Activated CD4-positive, alpha-beta T cell treated with anti-CD3 and anti-CD28 coated beads for 36 hours (primary cell): ENCODE measurements at regions of chr2 and their contacts with region 1.

Region 1: DNA sequence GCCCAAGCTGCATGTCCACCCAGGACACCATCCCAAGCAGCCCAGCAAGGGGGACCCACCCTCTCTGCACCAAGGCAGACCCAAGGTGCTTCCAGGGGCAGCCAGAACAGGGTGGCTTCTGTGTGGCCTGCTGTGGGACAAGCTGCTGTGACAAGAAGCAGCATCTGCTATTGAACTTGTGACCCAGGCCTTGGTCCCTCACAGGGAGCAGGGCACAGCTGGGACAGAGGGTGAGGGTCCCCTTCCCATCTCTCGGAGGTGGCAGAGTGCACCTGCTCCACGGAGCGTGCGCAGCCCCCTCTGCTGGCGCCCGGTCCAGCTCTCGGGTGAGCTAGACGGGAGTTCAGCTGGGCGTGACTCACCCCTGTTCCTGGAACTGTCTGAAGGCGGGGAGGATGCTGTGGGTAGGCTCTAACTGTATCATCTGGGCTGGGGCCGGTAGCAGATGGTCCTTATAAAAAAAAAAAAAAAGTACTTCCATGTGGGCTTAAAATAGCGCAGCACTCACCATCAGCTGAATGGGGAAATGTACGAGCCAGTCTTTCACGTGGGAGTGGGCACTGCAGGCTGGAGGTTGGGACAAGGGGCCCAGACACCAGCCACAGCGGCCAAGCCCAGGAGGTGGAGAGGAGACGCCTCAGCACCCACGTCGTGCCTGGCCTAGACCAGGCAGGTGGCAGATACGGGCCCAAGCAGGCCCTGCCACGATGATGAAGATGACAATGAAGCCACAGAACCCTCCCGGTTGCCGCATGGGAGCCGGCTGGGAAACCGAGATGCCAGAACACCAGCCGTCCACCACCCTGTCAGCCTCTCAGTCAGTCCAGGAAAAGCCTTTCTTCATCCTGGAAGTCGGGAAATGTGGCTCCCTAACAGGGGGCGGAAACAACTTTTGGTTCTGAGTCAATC is 136.8 kb upstream of the ID2 start:
- DNase-seq: peak; percentile 96
- ATAC-seq: peak; percentile 66
- H3K4me3 Mint-ChIP-seq: no peak overlapping the region
- H3K27ac Mint-ChIP-seq: peak overlapping the region; percentile 99
- H3K4me1 Mint-ChIP-seq: peaks cover 77% of the 10 kb centered on the region
- H3K27me3 Mint-ChIP-seq: no peaks in the 10 kb centered on the region

Region 2: GRCh38 chr2:7567646-7568045 is 977.4 kb before region 1 on chr2:
- CTCF ChIA-PET with region 1: interaction called, 6 read pairs
- POLR2A ChIA-PET with region 1: no interaction called
- intact Hi-C with region 1: loop called in 1 of 2 experiments (anchors 10 kb)
- DNase-seq: peak; percentile 81
- ATAC-seq: peak; percentile 93
- H3K4me3 Mint-ChIP-seq: peak overlapping the region; percentile 9
- H3K27ac Mint-ChIP-seq: peak overlapping the region; percentile 88
- H3K4me1 Mint-ChIP-seq: peaks cover 55% of the 10 kb centered on the region
- H3K27me3 Mint-ChIP-seq: no peaks in the 10 kb centered on the region

Region 3: GRCh38 chr2:7845332-7845731 is 699.7 kb before region 1 on chr2:
- CTCF ChIA-PET with region 1: no interaction called
- POLR2A ChIA-PET with region 1: no interaction called
- intact Hi-C with region 1: loop called in 1 of 2 experiments (anchors 1 kb)
- DNase-seq: no peak
- ATAC-seq: no peak
- H3K4me3 Mint-ChIP-seq: no peak overlapping the region
- H3K27ac Mint-ChIP-seq: no peak overlapping the region
- H3K4me1 Mint-ChIP-seq: peaks cover 40% of the 10 kb centered on the region
- H3K27me3 Mint-ChIP-seq: peaks cover 6% of the 10 kb centered on the region

Region 4: GRCh38 chr2:8090748-8091700 is 454.0 kb before region 1 on chr2:
- CTCF ChIA-PET with region 1: no interaction called
- POLR2A ChIA-PET with region 1: no interaction called
- intact Hi-C with region 1: loop called in 1 of 2 experiments (anchors 1 kb)
- DNase-seq: peak; percentile 90
- ATAC-seq: peak; percentile 100
- H3K4me3 Mint-ChIP-seq: no peak overlapping the region
- H3K27ac Mint-ChIP-seq: no peak overlapping the region
- H3K4me1 Mint-ChIP-seq: no peaks in the 10 kb centered on the region
- H3K27me3 Mint-ChIP-seq: no peaks in the 10 kb centered on the region

Region 5: DNA sequence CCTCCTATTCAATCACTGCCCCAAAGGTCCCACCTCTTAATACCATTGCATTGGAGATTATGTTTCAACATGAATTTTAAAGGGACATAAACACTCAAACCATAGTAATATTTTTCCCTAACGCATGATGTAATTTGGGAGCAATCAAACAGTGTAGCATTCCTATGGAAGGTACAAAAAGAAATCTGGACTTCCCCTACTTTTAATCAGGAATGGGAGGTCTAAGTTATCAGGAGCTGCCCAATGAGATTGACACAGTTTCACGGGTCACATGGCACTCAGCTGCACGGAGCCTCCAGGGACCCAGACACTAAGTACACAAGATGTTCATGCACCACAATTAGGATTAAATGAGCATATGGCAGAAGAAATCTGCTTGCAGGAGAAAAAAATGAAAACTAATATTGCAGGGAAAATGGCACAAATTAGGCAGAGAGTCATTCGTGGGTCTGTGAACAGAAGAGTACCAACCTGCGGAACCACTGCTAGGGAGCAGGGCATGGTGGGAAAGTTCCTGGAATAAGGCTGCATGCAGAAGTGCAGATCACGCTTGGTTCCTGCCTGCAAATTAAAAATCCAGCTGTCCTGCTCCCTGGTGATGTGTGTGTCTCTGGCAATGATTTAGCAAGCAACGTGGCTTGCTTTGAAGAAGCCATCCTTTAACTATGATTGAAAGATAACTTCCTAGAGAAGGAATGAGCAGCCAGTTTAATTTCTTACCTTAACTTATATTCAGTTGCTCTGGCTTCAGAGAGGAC is 189.8 kb before region 1 on chr2:
- CTCF ChIA-PET with region 1: no interaction called
- POLR2A ChIA-PET with region 1: no interaction called
- intact Hi-C with region 1: no loop called
- DNase-seq: no peak
- ATAC-seq: no peak
- H3K4me3 Mint-ChIP-seq: no peak overlapping the region
- H3K27ac Mint-ChIP-seq: no peak overlapping the region
- H3K4me1 Mint-ChIP-seq: no peaks in the 10 kb centered on the region
- H3K27me3 Mint-ChIP-seq: peaks cover 3% of the 10 kb centered on the region

Region 6: DNA sequence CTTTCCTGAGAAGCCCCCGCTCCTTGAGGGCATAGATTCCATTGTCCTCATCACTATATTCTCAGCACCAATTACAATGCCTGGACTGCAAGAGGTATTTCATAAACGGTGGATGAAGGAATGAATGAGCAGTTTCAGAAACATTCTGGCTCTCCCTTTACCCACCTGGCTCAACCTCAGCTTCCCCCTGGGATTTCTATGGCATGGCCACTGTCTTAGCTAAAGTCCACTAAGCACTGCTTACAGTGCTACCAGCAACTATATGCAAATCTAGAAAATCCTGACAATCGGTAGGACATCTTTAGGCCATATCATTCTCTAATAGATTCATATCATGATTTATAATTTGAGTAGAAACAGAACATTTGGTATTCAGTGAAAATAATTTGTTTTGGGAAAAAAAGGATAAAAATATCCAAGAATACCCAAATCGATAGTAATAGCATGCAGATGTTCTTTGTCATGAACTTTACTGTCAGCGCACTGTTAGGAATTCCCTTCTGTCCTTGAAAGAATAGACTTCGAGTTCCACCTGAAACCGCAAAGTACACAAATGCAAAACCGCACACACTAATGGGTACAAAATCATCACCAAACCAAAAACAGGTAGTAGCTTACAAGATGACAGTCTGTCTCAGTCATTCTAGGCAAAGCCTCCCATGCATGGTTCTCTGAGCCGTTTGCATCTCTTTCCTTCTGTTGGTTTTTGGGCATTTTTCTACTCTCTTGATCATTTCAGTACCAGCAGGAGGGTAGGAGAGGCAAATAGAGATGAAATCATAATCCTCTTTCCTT is 166.8 kb before region 1 on chr2:
- CTCF ChIA-PET with region 1: no interaction called
- POLR2A ChIA-PET with region 1: no interaction called
- intact Hi-C with region 1: loop called in 1 of 2 experiments (anchors 1 kb)
- DNase-seq: peak; percentile 27
- ATAC-seq: peak; percentile 79
- H3K4me3 Mint-ChIP-seq: no peak overlapping the region
- H3K27ac Mint-ChIP-seq: peak overlapping the region; percentile 68
- H3K4me1 Mint-ChIP-seq: peaks cover 33% of the 10 kb centered on the region
- H3K27me3 Mint-ChIP-seq: peaks cover 4% of the 10 kb centered on the region

Region 7: GRCh38 chr2:8488001-8488738 is 56.9 kb before region 1 on chr2:
- CTCF ChIA-PET with region 1: interaction called, 7 read pairs
- POLR2A ChIA-PET with region 1: interaction called, 9 read pairs
- intact Hi-C with region 1: loop called (anchors 1 kb)
- DNase-seq: peak; percentile 80
- ATAC-seq: peak; percentile 85
- H3K4me3 Mint-ChIP-seq: peak overlapping the region; percentile 72
- H3K27ac Mint-ChIP-seq: peak overlapping the region; percentile 86
- H3K4me1 Mint-ChIP-seq: peaks cover 49% of the 10 kb centered on the region
- H3K27me3 Mint-ChIP-seq: no peaks in the 10 kb centered on the region

Region 8: GRCh38 chr2:8608411-8608954 is 63.4 kb after region 1 on chr2:
- CTCF ChIA-PET with region 1: interaction called, 3 read pairs
- POLR2A ChIA-PET with region 1: no interaction called
- intact Hi-C with region 1: loop called (anchors 1 kb)
- DNase-seq: peak; percentile 67
- ATAC-seq: peak; percentile 90
- H3K4me3 Mint-ChIP-seq: no peak overlapping the region
- H3K27ac Mint-ChIP-seq: peak overlapping the region; percentile 73
- H3K4me1 Mint-ChIP-seq: peaks cover 32% of the 10 kb centered on the region
- H3K27me3 Mint-ChIP-seq: peaks cover 2% of the 10 kb centered on the region

Region 9: DNA sequence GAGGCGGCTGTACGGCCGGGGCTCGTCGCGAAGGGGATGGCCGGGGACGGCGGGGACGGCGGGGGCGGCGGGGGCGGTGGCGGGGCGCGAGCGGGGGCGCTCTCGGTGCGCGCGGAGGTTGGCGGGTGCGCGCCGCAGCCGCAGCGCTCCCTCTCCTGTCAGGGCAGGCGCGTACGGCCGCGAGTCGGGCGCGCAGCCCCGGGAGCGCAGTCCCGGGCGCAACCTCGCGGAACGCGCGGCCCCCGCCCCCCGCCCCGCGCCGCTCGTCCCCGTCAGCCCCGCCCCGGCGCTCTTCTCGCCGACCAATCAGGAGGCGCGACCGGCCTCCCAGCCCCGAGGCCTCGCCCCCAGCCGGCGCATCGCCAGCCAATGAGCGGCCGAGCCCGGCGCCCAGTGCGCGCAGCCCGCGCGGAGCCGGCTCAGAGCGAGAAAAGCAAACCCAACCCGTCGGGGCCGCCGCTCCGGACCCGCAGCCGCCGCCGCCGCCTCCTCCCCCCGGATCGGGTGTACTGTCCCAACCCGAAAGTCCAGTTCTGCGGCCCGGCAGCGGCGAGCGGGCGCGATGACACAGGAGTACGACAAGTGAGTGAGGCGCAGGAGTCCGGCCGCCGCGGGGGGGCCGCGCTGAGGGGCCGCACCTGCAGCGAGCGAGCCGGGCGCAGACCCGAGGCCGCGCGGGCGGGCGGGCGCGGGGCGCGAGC is 1406.4 kb after region 1 on chr2 and contains the start of gene GRHL1:
- CTCF ChIA-PET with region 1: no interaction called
- POLR2A ChIA-PET with region 1: no interaction called
- intact Hi-C with region 1: no loop called
- DNase-seq: peak; percentile 95
- ATAC-seq: peak; percentile 98
- H3K4me3 Mint-ChIP-seq: peak within 1 kb of the TSS; percentile 68
- H3K27ac Mint-ChIP-seq: no peak within 1 kb of the TSS
- H3K4me1 Mint-ChIP-seq: peaks cover 4% of the 10 kb centered on the region
- H3K27me3 Mint-ChIP-seq: peaks cover 39% of the 10 kb centered on the region
- total RNA-seq, gene GRHL1: 0.27 to 0.53 TPM